A673 (cell line): ENCODE measurements at regions of chr9 and their contacts with region 1.

Region 1: GRCh38 chr9:114470581-114470980 is 34.7 kb downstream of the WHRN start:
- DNase-seq: no peak
- H3K4me3 ChIP-seq: no peak overlapping the region
- H3K27ac ChIP-seq: no peak overlapping the region
- H3K4me1 ChIP-seq: no peaks in the 10 kb centered on the region
- H3K27me3 ChIP-seq: no peaks in the 10 kb centered on the region
- CTCF ChIP-seq: no peak

Region 2: DNA sequence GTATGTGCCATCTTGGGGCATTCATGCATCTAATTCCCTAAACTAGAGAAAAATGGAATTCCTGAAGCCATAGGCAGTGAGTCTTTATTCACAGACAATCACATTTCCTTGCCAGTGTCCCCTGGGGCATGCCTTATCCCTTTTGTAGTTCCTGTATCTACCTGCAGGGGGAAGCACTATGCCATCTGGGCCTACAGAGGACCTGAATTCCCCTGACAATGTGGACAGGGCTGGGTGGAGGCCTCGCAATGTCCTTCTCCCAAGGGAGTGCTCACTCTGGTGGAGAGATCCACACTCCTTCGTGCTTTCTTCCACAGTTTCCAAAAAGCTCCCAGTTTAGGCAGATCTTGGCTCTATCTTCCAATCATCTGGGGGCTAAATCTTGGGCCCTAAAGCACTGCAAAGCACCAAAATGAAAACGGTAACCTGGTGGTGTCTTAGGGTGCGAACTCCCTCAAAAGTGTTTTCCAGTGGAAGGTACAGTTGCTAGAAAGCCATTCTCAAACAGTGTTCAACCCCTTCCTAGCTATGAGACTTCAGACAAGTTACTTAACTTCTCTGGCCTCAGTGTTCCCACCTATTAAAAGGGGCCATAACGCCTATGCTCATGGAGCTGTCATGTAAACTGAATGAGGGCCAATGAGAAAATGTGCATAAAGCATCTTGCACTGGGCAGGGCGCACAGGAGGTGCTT is 17.2 kb after region 1 on chr9:
- CTCF ChIA-PET with region 1: no interaction called
- POLR2A ChIA-PET with region 1: no interaction called
- intact Hi-C with region 1: no loop called
- DNase-seq: peak; percentile 89
- H3K4me3 ChIP-seq: no peak overlapping the region
- H3K27ac ChIP-seq: no peak overlapping the region
- H3K4me1 ChIP-seq: no peaks in the 10 kb centered on the region
- H3K27me3 ChIP-seq: no peaks in the 10 kb centered on the region
- CTCF ChIP-seq: peak; percentile 85

Region 3: DNA sequence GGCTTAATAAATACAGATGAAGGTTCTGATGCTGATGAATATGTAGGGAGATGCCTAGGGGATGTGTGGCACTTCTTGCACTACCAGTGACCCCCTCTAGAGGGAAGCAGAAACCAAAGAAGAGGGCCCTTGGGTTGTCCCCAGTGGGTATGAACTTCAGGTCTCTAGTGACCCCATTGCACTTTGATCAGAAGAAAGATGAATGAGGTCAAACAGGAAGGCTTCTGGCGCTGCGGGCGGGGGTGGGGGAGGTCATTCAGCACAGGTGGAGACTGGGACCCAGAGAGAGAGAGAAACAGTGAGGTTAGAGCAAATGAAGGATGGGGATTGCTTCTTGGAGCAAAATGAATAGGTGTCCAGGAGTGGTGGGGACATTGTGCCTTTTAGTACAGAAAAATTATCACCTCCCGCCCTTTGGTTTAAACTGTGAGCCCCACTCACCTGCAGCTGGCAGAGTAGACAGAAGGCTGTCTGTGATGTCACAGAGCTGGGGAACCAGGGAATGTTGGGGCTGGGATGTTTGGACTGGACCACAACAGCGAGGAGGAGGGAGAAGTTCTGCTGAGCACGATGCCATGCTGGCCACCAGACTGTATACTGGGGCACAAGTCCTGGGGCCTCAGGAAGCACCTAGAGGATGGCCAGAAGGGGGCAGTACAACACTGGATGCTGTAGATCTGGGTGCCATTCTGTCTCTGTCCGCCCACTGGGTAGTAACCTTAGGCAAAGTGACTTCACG is 211.2 kb after region 1 on chr9 and contains the start of gene TEX48:
- CTCF ChIA-PET with region 1: no interaction called
- POLR2A ChIA-PET with region 1: no interaction called
- intact Hi-C with region 1: no loop called
- DNase-seq: peak; percentile 84
- H3K4me3 ChIP-seq: no peak within 1 kb of the TSS
- H3K27ac ChIP-seq: no peak within 1 kb of the TSS
- H3K4me1 ChIP-seq: peaks cover 16% of the 10 kb centered on the region
- H3K27me3 ChIP-seq: no peaks in the 10 kb centered on the region
- CTCF ChIP-seq: peak; percentile 74
- total RNA-seq, gene TEX48: not detected in 2 replicates

Region 4: GRCh38 chr9:114769624-114770023 is 299.0 kb after region 1 on chr9:
- CTCF ChIA-PET with region 1: no interaction called
- POLR2A ChIA-PET with region 1: interaction called, 13 read pairs
- intact Hi-C with region 1: no loop called
- DNase-seq: no peak
- H3K4me3 ChIP-seq: no peak overlapping the region
- H3K27ac ChIP-seq: no peak overlapping the region
- H3K4me1 ChIP-seq: no peaks in the 10 kb centered on the region
- H3K27me3 ChIP-seq: no peaks in the 10 kb centered on the region
- CTCF ChIP-seq: no peak